ENCODE measurements at regions of chr1 and their contacts with region 1.

Region 1: DNA sequence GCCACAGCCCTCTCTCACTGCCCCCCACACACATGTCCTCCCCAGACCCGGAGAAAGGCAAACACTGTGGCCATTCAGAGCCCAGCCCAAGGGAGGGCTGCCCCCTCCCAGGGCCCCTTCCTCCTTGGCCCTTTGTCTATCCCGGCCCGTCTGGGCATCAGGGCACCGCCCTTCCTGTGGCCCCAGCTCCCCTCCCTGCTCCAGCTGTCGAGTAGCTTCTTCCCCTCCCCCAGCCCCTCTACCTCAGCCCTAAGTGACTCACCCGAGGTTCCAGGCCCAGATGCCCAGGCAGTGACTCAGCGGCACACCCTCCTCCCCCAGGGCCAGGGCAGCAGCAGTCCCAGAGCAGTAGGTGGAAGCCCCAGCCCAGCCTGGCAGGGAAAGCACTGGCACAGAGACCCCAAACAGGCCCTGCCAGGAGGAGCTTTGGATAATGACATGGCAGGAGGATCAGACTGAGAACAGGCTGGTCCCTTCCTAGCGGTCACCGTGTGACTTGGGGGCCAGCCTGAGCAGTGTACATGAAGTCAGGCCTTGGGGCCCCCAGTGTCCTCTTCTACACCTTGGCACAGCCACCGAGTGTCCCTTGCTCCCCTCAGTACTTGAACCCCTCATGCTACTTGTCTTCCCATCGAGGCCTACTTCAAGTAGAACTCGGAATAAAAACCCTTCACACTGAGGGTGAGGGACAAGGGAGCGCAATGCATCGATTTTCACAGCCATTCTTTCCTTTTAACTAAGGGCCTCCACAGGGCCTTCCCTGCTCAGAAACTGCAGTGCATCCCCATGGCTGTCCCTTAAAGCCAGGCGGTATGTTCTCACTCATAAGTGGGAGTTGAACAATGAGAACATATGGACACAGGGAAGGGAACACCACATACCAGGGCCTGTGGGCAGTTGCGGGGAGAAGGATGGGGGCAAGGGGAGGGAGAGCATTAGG is 1.1 kb upstream of the S100A2 start:
- DNase-seq: peak; percentile 98 to 100
- ATAC-seq: peak; percentile 78 to 84
- H3K4me3 ChIP-seq: peak overlapping the region in 1 of 4 donors; percentile 8
- H3K27ac ChIP-seq: peak overlapping the region; percentile 87 to 94 (median 92)
- H3K4me1 ChIP-seq: peaks cover 27 to 38% of the 10 kb centered on the region in 2 donors
- H3K27me3 ChIP-seq: no peaks in the 10 kb centered on the region
- CTCF ChIP-seq: no peak
- POLR2A ChIP-seq: peak; percentile 48 to 53

Region 2: DNA sequence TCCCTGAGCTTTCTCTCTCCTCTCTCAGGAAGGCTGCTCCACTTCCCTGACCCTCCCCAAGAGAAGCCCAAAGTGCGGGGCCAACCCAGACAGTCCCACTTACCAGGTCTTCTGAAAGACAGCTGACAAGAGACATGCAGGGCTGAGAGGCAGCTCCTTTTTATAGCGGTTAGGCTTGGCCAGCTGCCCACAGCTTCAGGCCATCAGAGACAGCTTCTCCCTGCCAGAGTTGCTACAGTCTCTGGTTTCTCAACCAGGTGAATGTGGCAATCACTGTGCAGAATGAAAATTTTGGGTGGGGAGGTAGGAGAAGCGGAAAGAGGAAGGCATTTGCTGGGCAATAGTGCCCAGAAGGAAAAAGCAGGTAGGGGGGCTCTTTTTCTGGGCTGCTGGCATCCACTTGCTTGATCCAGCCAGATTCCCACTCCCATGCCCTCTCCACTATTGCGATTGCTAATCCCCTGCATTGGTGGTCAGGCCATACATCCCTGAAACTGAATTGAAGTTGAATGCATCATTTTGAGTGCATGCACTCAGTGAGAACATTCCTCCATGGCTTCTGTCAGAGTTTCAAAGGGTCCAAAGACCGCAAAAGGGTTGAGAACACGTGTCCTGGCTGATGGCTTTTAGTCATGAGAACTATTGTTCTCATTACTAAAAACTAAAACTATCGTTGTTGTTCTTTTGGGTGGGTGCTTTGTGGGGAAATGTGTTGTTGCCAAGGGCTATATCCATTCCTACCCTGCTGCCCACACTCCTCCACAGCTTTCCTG is 175.6 kb before region 1 on chr1 and contains the start of gene S100A8:
- in situ Hi-C with region 1: no loop called
- intact Hi-C with region 1: loop called (anchors 1 kb)
- DNase-seq: peak; percentile 83 to 90
- ATAC-seq: peak; percentile 89
- H3K4me3 ChIP-seq: peak within 1 kb of the TSS in 1 of 4 donors; percentile 8
- H3K27ac ChIP-seq: peak within 1 kb of the TSS in 3 of 4 donors; percentile 44 to 66 (median 63)
- H3K4me1 ChIP-seq: peaks cover 13 to 40% of the 10 kb centered on the region in 2 donors
- H3K27me3 ChIP-seq: no peaks in the 10 kb centered on the region
- CTCF ChIP-seq: no peak
- POLR2A ChIP-seq: peak; percentile 10 to 35
- total RNA-seq, gene S100A8: 4.2 to 41.6 (median 12.5) TPM

Region 3: DNA sequence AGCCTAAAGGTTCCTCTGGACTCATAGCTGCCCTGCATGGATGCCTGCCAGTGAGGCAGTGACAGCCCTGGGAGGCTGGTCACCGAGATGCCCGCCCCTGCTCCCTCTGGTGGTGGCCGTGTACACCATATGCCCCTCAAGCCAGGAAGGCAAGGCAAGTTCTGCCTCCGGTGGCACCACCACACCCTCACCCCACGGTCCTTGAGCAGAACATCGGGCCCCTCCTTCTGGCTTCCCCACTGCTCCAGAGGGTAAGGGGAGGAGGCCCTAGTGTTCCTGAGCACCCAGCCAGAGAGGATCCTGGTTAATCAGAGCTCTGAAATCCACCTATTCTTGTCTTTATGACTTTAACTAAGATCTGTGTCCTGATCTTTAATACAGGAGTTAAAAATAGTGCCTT is 51.0 kb after region 1 on chr1:
- in situ Hi-C with region 1: no loop called
- intact Hi-C with region 1: no loop called
- DNase-seq: peak in 1 of 2 donors; percentile 75
- ATAC-seq: peak in 1 of 2 donors; percentile 64
- H3K4me3 ChIP-seq: no peak overlapping the region
- H3K27ac ChIP-seq: peak overlapping the region in 3 of 4 donors; percentile 16 to 66 (median 57)
- H3K4me1 ChIP-seq: peaks cover 3 to 7% of the 10 kb centered on the region in 2 donors
- H3K27me3 ChIP-seq: no peaks in the 10 kb centered on the region
- CTCF ChIP-seq: peak in 4 of 5 experiments; percentile 51 to 86 (median 60)
- POLR2A ChIP-seq: no peak